Activated T-helper 1 cell treated with anti-CD3 and anti-CD28 coated beads, Interleukin-12 subunit alpha, Interleukin-12 subunit beta, Interleukin-2, Interleukin-4 antibody, amounts not matched to agents 30 ng/mL and 10 ng/mL and 1 ng/mL, durations not matched to agents 14 hours and 24 hours and 36 hours (primary cell): ENCODE measurements at regions of chr3 and their contacts with region 1.

Region 1: DNA sequence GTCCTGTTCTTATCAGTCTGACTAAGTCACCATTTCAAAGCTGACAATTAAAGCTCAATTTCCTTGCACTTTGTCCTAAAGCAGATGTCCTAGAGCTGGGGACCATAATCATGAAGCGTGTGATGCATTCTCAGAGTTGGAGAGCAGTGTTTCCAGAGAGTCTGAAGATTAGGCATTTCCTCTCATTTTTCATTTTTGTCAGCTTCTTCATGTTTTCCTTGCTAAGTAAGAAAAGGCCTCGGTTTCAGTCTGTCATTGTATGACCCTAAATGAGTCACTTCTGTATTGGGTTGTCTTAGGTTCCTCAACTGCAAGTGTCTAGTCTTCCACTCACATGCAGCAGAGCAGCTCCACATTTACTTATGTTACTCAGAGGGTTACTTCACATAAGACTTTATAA is 257.2 kb upstream of the TPRG1 start:
- DNase-seq: no peak
- H3K4me3 Mint-ChIP-seq: peak overlapping the region; percentile 34
- H3K27ac Mint-ChIP-seq: peak overlapping the region; percentile 88
- H3K4me1 Mint-ChIP-seq: peaks cover 46% of the 10 kb centered on the region
- H3K27me3 Mint-ChIP-seq: no peaks in the 10 kb centered on the region

Region 2: DNA sequence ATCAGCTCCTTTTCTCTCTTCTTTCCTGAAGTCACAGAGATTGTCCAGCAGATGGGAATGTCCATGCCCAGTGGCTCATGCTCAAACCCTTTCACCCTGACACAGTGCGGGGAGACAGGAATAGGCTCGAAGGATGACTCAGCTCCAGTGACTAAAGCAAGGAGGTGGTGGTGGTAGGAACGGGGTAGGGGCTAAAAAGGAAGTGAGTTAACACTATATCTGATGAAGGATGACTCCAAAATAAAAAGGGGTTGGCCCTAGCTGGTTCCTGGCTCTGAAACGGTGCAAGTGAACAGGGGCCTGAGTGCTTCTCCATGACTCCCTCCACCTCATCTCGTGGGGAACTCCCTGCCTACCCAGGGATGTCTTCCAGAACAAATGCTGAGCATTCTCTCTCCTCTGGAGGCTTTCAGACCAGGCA is 928.0 kb before region 1 on chr3:
- intact Hi-C with region 1: loop called (anchors 5 kb)
- DNase-seq: peak; percentile 34
- H3K4me3 Mint-ChIP-seq: peak overlapping the region; percentile 21
- H3K27ac Mint-ChIP-seq: peak overlapping the region; percentile 82
- H3K4me1 Mint-ChIP-seq: peaks cover 70% of the 10 kb centered on the region
- H3K27me3 Mint-ChIP-seq: no peaks in the 10 kb centered on the region

Region 3: DNA sequence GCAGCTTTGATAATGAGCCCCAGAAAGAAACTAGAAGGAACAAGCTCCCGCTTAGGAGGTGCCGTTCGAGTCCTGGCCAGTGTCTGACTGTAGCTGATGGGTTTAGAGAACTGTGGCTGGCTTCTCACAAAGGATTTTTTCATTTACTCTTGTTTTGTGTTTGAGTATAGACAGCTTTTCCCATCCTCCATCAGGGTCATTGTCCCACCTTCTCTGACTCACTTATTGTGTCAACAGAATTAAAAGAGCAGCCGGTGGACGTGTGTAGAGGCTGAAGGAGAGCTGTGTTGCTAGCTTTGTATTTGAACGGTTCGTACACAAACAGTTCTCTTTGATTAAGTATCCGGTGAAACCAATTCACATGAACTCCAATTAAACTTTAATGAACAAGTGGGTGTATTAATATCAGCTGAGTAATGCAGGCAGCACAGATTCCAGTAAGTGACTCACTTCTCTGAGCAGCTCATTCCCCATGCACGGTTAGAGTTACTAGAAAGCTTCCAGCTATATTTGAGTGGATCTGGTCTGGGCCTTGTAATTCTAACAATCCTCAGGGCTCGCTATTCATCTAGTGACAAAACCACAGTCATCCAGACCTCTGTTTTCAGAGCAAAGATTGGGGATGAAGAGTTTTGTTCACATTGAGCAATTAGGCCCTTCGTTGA is 619.6 kb before region 1 on chr3:
- intact Hi-C with region 1: loop called (anchors 1 kb)
- DNase-seq: no peak
- H3K4me3 Mint-ChIP-seq: no peak overlapping the region
- H3K27ac Mint-ChIP-seq: peak overlapping the region; percentile 33
- H3K4me1 Mint-ChIP-seq: peaks cover 86% of the 10 kb centered on the region
- H3K27me3 Mint-ChIP-seq: no peaks in the 10 kb centered on the region

Region 4: GRCh38 chr3:188584162-188584529 is 330.4 kb before region 1 on chr3:
- intact Hi-C with region 1: loop called (anchors 1 kb)
- DNase-seq: no peak
- H3K4me3 Mint-ChIP-seq: no peak overlapping the region
- H3K27ac Mint-ChIP-seq: no peak overlapping the region
- H3K4me1 Mint-ChIP-seq: no peaks in the 10 kb centered on the region
- H3K27me3 Mint-ChIP-seq: no peaks in the 10 kb centered on the region

Region 5: GRCh38 chr3:188788621-188789081 is 125.9 kb before region 1 on chr3:
- intact Hi-C with region 1: loop called (anchors 1 kb)
- DNase-seq: peak; percentile 49
- H3K4me3 Mint-ChIP-seq: no peak overlapping the region
- H3K27ac Mint-ChIP-seq: no peak overlapping the region
- H3K4me1 Mint-ChIP-seq: peaks cover 6% of the 10 kb centered on the region
- H3K27me3 Mint-ChIP-seq: peaks cover 8% of the 10 kb centered on the region

Region 6: GRCh38 chr3:189331002-189331418 is 416.5 kb after region 1 on chr3:
- intact Hi-C with region 1: loop called (anchors 2 kb)
- DNase-seq: no peak
- H3K4me3 Mint-ChIP-seq: peak overlapping the region; percentile 48
- H3K27ac Mint-ChIP-seq: peak overlapping the region; percentile 73
- H3K4me1 Mint-ChIP-seq: peaks cover 58% of the 10 kb centered on the region
- H3K27me3 Mint-ChIP-seq: no peaks in the 10 kb centered on the region